ENCODE measurements at regions of chr11 and their contacts with region 1.

Region 1: DNA sequence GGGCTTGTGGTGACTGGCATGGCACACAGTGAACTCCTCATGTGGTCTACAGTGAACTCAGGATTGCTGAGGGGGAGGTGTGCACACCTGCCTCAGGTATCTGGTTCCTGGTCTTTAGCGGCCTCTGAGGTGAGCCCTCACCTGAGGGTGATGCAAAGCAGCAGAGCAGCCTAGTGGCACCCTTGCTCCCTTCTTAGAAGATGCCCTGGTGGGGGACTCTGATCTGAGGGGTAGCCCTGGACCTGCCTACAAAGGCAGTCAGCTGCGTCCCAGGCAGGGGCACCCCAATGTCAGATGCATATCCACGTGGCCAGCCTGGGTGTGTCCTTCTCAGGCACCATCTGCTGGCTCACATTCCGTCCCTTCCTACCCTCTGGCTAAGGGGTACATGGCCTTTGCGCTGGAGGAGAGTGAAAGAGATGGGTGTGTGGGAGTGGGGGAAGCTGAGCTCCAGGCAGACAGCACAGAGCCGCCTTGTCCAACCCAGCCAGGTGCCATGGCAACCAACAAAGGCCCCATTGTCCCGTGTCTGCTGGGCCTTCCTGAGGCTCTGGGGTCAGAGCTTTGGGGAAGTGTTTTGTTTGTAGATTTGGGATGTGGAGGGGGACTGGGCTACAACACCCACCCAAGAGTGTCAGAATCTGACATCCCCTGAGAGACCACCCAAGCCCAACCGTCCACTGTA is 5.8 kb downstream of the PLEKHB1 start:
- DNase-seq: peak; percentile 75
- H3K4me3 ChIP-seq: no peak overlapping the region
- H3K27ac ChIP-seq: peak overlapping the region; percentile 23
- H3K4me1 ChIP-seq: peaks cover 23% of the 10 kb centered on the region
- H3K27me3 ChIP-seq: no peaks in the 10 kb centered on the region
- CTCF ChIP-seq: no peak

Region 2: GRCh38 chr11:73184953-73185671 is 467.1 kb before region 1 on chr11:
- CTCF ChIA-PET with region 1: no interaction called
- dilution Hi-C with region 1: no loop called
- in situ Hi-C with region 1: no loop called
- intact Hi-C with region 1: no loop called
- DNase-seq: peak; percentile 77
- H3K4me3 ChIP-seq: peak overlapping the region in 1 of 3 experiments; percentile 3
- H3K27ac ChIP-seq: peak overlapping the region; percentile 60
- H3K4me1 ChIP-seq: peaks cover 38% of the 10 kb centered on the region
- H3K27me3 ChIP-seq: no peaks in the 10 kb centered on the region
- CTCF ChIP-seq: peak; percentile 99 to 100

Region 3: DNA sequence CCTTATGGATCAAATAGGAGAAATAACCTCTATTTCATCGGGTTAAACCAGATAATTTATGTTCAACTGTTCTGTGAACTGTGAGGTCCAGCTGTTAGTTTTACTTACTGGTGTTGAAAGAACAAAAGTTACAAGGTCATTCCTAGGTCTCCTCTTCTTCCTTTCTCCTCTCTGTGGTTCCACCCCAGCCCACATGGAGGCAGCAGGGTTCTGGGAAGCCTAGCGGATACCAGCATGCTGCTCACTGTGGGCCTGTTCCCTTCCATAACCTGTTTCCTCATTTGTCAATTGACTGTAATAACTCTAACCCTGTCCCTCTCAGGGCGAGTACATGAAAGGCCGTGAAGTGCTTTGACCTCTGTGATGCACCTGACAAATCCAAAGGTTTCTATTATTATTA is 248.1 kb before region 1 on chr11:
- CTCF ChIA-PET with region 1: no interaction called
- dilution Hi-C with region 1: loop called (anchors 5 kb)
- in situ Hi-C with region 1: no loop called
- intact Hi-C with region 1: no loop called
- DNase-seq: peak; percentile 31
- H3K4me3 ChIP-seq: no peak overlapping the region
- H3K27ac ChIP-seq: no peak overlapping the region
- H3K4me1 ChIP-seq: no peaks in the 10 kb centered on the region
- H3K27me3 ChIP-seq: no peaks in the 10 kb centered on the region
- CTCF ChIP-seq: peak; percentile 54 to 56

Region 4: DNA sequence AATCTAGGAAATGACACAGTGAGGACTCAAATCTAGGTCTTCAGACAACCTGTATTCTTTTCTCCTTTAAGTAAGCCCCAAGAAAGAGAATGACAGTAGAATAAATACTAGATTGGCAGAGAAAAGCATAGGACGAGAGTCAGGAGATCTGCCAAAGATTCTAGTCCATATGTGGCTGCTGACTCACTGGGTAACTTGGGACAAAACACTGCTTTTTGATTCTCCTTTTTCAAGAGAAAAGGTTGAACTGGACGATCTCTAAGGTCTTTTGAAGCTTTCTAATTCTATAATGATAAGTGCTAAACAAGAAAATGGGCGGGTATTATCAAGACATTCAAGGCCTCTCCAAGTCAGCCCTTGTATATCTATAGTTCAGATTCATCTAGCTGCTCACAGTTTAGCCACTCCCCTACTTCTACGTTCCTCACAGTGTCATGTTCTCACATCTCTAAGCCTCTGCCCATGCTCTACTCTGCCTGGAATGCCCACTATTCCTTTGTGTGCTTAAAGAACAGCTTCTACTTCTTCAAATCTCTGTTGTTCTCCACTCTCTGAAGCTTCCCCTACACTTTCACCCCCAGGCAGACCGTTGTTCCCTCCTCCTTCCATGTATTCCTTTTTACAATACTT is 223.0 kb before region 1 on chr11:
- CTCF ChIA-PET with region 1: no interaction called
- dilution Hi-C with region 1: loop called (anchors 5 kb)
- in situ Hi-C with region 1: no loop called
- intact Hi-C with region 1: no loop called
- DNase-seq: no peak
- H3K4me3 ChIP-seq: no peak overlapping the region
- H3K27ac ChIP-seq: no peak overlapping the region
- H3K4me1 ChIP-seq: peaks cover under 1% of the 10 kb centered on the region
- H3K27me3 ChIP-seq: no peaks in the 10 kb centered on the region
- CTCF ChIP-seq: no peak

Region 5: GRCh38 chr11:73469401-73469800 is 182.8 kb before region 1 on chr11:
- CTCF ChIA-PET with region 1: no interaction called
- dilution Hi-C with region 1: loop called (anchors 5 kb)
- in situ Hi-C with region 1: no loop called
- intact Hi-C with region 1: no loop called
- DNase-seq: no peak
- H3K4me3 ChIP-seq: no peak overlapping the region
- H3K27ac ChIP-seq: no peak overlapping the region
- H3K4me1 ChIP-seq: no peaks in the 10 kb centered on the region
- H3K27me3 ChIP-seq: no peaks in the 10 kb centered on the region
- CTCF ChIP-seq: no peak

Region 6: DNA sequence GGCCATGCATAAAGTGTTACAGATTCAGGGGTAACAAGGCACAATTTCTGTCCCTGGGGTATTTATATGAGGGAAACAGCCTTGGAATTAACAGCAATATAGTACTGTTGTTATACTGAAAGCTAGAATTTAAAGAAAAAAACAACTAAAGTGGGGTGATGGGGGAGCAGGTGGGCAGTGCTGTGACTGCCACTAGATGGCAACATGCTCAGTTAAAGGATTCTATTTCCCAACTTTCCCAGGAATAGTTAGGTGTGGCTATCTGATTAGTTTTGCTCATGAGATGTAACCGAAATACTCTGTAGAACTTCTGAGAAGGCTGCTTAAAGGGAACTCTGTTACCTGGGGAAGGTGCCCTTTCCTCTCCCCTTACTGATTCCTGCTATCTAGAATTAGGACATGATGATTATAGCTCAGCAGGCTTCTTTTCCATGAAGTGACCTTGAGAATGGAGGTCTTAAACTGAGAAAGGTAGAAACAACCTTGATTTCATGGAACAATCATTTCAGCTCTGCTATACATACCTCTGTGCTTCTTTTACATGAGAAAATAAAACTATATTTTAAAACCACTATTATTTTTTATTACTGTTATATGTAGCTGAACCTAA is 173.3 kb before region 1 on chr11:
- CTCF ChIA-PET with region 1: interaction called, 4 read pairs
- dilution Hi-C with region 1: no loop called
- in situ Hi-C with region 1: loop called in 1 of 2 experiments (anchors 10 kb)
- intact Hi-C with region 1: no loop called
- DNase-seq: peak; percentile 51
- H3K4me3 ChIP-seq: no peak overlapping the region
- H3K27ac ChIP-seq: peak overlapping the region; percentile 3
- H3K4me1 ChIP-seq: peaks cover 6% of the 10 kb centered on the region
- H3K27me3 ChIP-seq: no peaks in the 10 kb centered on the region
- CTCF ChIP-seq: peak; percentile 91 to 96

Region 7: GRCh38 chr11:73570415-73571114 is 81.6 kb before region 1 on chr11:
- CTCF ChIA-PET with region 1: no interaction called
- dilution Hi-C with region 1: loop called (anchors 5 kb)
- in situ Hi-C with region 1: no loop called
- intact Hi-C with region 1: no loop called
- DNase-seq: peak; percentile 99
- H3K4me3 ChIP-seq: peak overlapping the region in 2 of 3 experiments; percentile 10 to 11
- H3K27ac ChIP-seq: peak overlapping the region; percentile 82
- H3K4me1 ChIP-seq: peaks cover 17% of the 10 kb centered on the region
- H3K27me3 ChIP-seq: no peaks in the 10 kb centered on the region
- CTCF ChIP-seq: no peak

Region 8: DNA sequence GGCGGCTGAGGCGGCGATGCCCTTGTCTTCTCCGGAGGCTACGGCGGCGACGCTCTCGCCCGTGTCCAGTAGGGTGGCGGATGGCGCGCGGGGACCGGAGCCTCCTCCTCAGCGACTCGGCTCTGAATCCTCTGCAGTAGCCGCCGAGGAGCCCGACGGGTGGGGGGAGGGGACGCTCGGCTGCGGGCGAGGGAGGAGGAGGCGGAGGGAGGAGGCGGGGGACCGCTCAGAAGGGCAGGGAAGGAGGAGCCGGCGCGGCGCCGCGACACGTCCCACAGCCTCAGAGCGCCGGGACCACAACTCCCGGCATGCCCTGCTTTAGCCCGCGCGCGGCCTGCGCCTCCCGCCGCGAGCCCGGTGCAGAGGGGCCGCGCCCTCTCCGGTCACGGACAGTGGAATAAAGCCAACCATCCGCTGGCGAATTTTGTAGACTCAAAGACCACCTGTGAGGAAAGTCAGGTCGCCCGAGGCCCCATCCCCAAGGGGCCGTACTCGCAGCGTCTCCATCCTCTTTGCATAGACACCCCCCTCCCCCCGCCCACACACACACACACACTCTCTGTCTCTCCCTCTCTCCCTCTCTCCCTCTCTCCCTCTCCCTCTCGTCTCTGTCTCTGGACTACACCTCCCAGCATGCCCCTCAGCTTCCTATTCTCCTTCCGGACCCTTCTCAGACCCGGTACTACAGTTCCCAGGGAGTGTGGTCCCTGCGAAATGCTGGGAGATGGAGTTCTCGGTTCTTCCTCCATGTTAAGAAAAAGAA is 54.1 kb before region 1 on chr11 and contains the start of gene FAM168A:
- CTCF ChIA-PET with region 1: no interaction called
- dilution Hi-C with region 1: no loop called
- in situ Hi-C with region 1: loop called in 1 of 2 experiments (anchors 10 kb)
- intact Hi-C with region 1: no loop called
- DNase-seq: peak; percentile 98
- H3K4me3 ChIP-seq: peak within 1 kb of the TSS; percentile 68 to 100 (median 75)
- H3K27ac ChIP-seq: peak within 1 kb of the TSS; percentile 48
- H3K4me1 ChIP-seq: peaks cover 8% of the 10 kb centered on the region
- H3K27me3 ChIP-seq: no peaks in the 10 kb centered on the region
- CTCF ChIP-seq: peak; percentile 5 to 31
- total RNA-seq, gene FAM168A: 28.2 to 33.4 TPM

Region 9: DNA sequence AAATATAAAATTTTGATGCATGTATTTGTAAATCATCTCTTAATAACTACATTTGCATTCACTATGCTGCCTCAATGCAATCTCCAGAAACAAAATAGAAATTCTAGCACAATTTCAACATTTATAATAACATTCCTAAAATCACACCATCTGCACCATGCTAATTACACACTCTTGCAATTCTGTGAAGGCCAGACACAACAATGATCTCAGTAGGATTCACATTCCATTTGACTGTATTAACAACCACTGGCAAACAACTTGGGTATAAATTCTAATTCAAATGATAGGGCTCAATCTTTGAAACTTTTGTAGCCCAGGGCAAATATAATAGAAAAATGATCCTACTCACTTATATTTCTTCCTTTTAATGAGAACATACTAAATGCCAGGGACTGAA is 82.8 kb after region 1 on chr11:
- CTCF ChIA-PET with region 1: no interaction called
- dilution Hi-C with region 1: no loop called
- in situ Hi-C with region 1: no loop called
- intact Hi-C with region 1: no loop called
- DNase-seq: peak; percentile 8
- H3K4me3 ChIP-seq: no peak overlapping the region
- H3K27ac ChIP-seq: no peak overlapping the region
- H3K4me1 ChIP-seq: no peaks in the 10 kb centered on the region
- H3K27me3 ChIP-seq: no peaks in the 10 kb centered on the region
- CTCF ChIP-seq: no peak

Region 10: DNA sequence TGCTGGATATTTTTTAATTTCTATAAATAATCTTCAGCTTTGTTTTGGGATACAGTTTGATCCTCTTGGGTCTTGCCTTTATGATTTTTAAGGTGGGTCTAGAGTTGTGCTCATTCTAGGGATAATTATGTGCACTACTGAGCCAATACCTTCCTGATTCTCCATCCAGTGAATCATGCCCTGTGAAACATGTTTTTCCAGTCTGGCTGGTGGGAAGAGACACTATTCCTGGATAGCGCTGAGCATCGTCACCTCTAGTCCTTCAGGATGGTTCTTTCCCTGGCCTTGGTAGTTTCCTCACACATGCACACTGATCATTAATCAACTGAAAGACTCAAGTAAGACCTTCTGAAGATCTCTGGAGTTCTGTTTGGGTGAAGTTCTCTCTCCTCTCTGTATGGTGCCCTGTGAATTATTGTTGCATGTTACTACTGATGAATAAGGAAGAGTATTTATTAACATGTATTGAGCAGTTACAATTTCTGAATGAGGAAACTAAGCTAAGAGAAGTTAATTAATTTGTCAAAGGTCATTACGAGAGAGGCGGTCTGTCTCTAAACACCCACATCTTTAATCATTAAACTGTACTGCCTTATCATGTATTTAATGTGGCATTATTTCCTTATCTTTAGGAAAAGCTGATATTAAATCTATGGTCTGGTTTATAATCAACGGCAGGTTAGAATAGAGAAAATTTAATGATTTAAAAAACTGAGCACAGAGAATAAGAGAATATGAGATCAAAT is 880.5 kb after region 1 on chr11:
- CTCF ChIA-PET with region 1: no interaction called
- dilution Hi-C with region 1: no loop called
- in situ Hi-C with region 1: no loop called
- intact Hi-C with region 1: no loop called
- DNase-seq: peak; percentile 88
- H3K4me3 ChIP-seq: no peak overlapping the region
- H3K27ac ChIP-seq: no peak overlapping the region
- H3K4me1 ChIP-seq: peaks cover 12% of the 10 kb centered on the region
- H3K27me3 ChIP-seq: no peaks in the 10 kb centered on the region
- CTCF ChIP-seq: no peak

Measured in mammary epithelial cell (primary cell).